A549 (cell line): ENCODE measurements at regions of chr1 and their contacts with region 1.

Region 1: GRCh38 chr1:56821140-56821797 is 2.1 kb upstream of the FYB2 start:
- DNase-seq: peak; percentile 57 to 69
- ATAC-seq: peak; percentile 89 to 98
- H3K4me3 ChIP-seq: no peak overlapping the region
- H3K27ac ChIP-seq: no peak overlapping the region
- H3K4me1 ChIP-seq: peaks cover 5% of the 10 kb centered on the region
- CTCF ChIP-seq: peak; percentile 76
- EP300 ChIP-seq: no peak
- POLR2A ChIP-seq: no peak
- RAD21 ChIP-seq: peak; percentile 80 to 83

Region 2: GRCh38 chr1:56803561-56804156 is 17.6 kb before region 1 on chr1:
- CTCF ChIA-PET with region 1: interaction called, 13 read pairs
- POLR2A ChIA-PET with region 1: no interaction called
- DNase-seq: peak; percentile 26 to 48
- ATAC-seq: peak; percentile 87 to 93
- H3K4me3 ChIP-seq: no peak overlapping the region
- H3K27ac ChIP-seq: no peak overlapping the region
- H3K4me1 ChIP-seq: no peaks in the 10 kb centered on the region
- CTCF ChIP-seq: peak; percentile 52
- EP300 ChIP-seq: no peak
- POLR2A ChIP-seq: no peak
- RAD21 ChIP-seq: peak; percentile 43 to 62

Region 3: DNA sequence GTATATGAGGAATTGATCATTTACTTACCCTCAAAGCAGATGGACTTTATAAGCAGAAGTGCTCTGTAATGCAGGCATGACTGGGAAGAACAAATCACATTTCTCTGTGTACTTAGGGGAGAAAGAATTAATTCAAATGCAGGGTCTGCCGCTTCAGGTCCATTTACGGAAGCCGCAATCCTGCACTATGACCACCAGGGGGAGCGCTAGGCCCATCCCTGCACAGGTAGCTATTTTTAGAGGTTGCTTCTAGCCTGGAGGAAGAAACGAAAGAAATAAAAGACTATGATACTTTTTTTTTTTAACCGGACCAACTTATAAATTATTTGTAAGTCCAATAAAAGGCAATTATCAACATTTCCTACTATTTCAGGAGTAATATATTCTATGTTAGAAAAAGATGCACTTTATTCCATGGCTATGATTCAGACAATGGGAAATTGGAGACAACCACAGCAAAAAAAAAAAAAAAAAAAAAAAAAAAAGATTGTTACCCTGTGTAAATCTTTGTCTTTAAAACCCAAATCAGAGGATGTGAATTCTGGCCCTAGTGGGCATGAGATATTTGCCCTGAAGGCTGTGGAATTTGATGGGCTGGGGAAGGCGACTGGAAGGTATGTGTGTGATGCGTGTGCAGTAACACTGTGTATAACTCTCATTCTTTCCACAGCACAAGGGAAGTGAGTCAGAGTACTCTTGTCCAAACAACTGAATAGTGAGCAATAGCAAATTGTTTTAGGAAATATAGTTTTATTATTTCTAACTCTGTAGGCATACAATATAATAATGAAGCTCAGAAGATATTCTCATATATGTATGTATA is 10.8 kb after region 1 on chr1:
- CTCF ChIA-PET with region 1: interaction called, 12 read pairs
- POLR2A ChIA-PET with region 1: no interaction called
- DNase-seq: peak; percentile 35 to 58
- ATAC-seq: peak; percentile 75 to 83
- H3K4me3 ChIP-seq: no peak overlapping the region
- H3K27ac ChIP-seq: no peak overlapping the region
- H3K4me1 ChIP-seq: no peaks in the 10 kb centered on the region
- CTCF ChIP-seq: peak; percentile 82
- EP300 ChIP-seq: no peak
- POLR2A ChIP-seq: no peak
- RAD21 ChIP-seq: peak; percentile 83 to 89

Region 4: DNA sequence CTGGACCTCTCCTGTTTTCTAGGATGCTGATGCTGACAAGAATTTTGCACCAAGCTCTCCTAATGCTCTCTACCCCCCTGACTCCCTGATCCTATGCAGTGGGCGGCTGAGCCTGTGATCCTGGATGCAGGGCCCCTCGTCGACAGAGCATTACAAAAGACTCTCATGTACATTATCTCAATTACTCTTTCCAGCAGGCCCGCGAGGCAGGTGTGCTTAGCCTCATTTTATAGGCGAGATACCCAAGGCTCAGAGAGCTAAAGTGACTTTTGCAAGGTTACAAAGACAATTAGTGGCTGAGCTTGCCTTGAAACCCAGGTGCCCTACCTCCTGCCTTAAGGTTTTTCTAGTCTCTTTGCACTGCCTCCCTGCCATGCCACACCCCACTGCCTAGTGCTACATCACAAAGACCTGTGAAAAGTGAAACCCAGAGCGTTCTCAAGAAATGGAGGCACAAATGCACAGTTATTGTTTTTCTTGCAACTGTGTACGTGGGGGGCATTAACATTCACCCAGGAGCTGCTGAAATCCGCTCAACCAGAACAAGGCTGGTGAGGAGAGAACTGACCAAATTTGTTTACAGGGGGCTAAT is 23.4 kb after region 1 on chr1:
- CTCF ChIA-PET with region 1: no interaction called
- POLR2A ChIA-PET with region 1: no interaction called
- DNase-seq: no peak
- ATAC-seq: no peak
- H3K4me3 ChIP-seq: no peak overlapping the region
- H3K27ac ChIP-seq: no peak overlapping the region
- H3K4me1 ChIP-seq: no peaks in the 10 kb centered on the region
- CTCF ChIP-seq: no peak
- EP300 ChIP-seq: no peak
- POLR2A ChIP-seq: no peak
- RAD21 ChIP-seq: no peak